ENCODE measurements at regions of chr12 and their contacts with region 1.

Region 1: DNA sequence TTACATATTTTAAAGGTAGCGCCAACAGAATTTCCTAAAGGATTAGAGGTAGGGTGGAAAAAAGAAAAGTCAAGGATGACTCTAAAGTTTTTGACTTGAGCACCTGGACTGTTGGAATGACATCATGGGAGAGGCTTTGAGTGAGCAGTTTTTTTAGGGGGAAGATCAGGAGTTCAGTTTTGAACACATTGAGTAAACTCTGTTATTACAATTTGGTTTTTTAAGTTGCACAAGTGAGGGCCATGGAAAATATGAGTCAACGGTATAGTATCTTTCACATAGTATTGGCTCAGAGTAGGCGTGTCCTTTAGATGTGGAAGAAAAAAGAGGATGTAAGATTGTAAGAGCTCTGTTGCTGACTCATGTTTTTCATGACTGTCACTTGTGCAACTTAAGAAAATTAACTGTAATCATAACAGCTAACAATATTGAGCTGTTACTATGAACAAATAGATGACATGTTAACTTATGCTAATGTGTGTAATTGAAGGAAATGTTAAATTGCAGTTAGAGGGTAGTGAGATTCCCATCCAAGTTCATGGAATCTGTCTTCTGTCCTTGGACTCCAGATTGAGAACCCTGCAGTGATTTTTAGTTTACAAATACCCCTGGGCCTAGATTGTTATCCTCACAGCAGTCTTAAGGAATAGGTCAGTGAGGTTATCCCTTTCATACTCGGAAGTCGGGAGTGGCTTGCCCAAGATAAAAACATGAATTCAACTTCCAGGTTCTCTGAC is 48.1 kb upstream of the ATP2B1 start:
- DNase-seq: peak; percentile 78
- H3K4me3 Mint-ChIP-seq: peak overlapping the region; percentile 10
- H3K27ac Mint-ChIP-seq: peak overlapping the region; percentile 77
- H3K4me1 Mint-ChIP-seq: peaks cover 22% of the 10 kb centered on the region
- H3K27me3 Mint-ChIP-seq: peaks cover 2% of the 10 kb centered on the region

Region 2: GRCh38 chr12:89768586-89769486 is 12.1 kb after region 1 on chr12:
- intact Hi-C with region 1: loop called (anchors 1 kb)
- DNase-seq: no peak
- H3K4me3 Mint-ChIP-seq: no peak overlapping the region
- H3K27ac Mint-ChIP-seq: no peak overlapping the region
- H3K4me1 Mint-ChIP-seq: peaks cover 11% of the 10 kb centered on the region
- H3K27me3 Mint-ChIP-seq: no peaks in the 10 kb centered on the region

Region 3: DNA sequence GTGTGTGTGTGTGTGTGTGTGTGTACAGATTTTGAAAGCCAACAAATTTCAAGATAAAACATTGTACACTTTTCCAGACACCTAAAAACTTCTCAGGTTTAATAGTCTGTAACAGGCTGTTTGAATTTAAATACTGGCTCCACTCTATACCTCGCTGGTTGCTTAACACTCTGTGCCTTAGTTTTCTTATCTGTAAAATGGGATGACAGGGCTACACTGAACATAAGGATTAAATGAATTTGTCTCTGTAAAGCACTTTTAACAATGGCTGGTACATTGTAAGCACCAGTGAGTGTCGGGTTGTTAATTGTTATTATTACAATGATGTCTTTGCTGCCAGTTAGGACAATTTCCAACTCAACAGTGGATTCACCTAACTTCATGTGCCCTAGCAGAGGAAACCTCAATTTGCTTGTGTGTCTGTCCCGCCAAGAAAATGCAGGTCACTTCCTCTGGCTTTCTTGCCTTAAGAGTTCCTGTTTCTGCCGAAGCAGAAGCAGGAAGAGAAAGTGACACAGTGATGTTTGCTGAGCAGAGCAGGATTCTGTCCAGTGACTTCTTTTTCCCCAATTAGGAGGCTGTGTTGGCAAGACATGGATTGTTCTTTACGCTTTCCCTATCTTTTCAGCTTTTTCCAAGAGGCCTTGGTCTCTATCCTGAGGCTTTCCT is 105.9 kb after region 1 on chr12:
- intact Hi-C with region 1: loop called (anchors 1 kb)
- DNase-seq: peak; percentile 86
- H3K4me3 Mint-ChIP-seq: peak overlapping the region; percentile 84
- H3K27ac Mint-ChIP-seq: peak overlapping the region; percentile 97
- H3K4me1 Mint-ChIP-seq: peaks cover 42% of the 10 kb centered on the region
- H3K27me3 Mint-ChIP-seq: no peaks in the 10 kb centered on the region

Region 4: GRCh38 chr12:89949457-89950195 is 192.9 kb after region 1 on chr12:
- intact Hi-C with region 1: loop called (anchors 1 kb)
- DNase-seq: peak; percentile 86
- H3K4me3 Mint-ChIP-seq: peak overlapping the region; percentile 1
- H3K27ac Mint-ChIP-seq: peak overlapping the region; percentile 4
- H3K4me1 Mint-ChIP-seq: peaks cover 19% of the 10 kb centered on the region
- H3K27me3 Mint-ChIP-seq: peaks cover 2% of the 10 kb centered on the region